Activated CD8-positive, alpha-beta T cell treated with anti-CD3 and anti-CD28 coated beads, Interleukin-2, amount 10 ng/mL, durations not matched to agents 7 days and 5 days (primary cell): ENCODE measurements at regions of chr1 and their contacts with region 1.

Region 1: GRCh38 chr1:101506541-101507164 is 269.8 kb downstream of the S1PR1 start:
- DNase-seq: peak; percentile 62
- ATAC-seq: peak; percentile 57
- H3K4me3 Mint-ChIP-seq: no peak overlapping the region
- H3K27ac Mint-ChIP-seq: no peak overlapping the region
- H3K4me1 Mint-ChIP-seq: no peaks in the 10 kb centered on the region
- H3K27me3 Mint-ChIP-seq: peaks cover 14% of the 10 kb centered on the region

Region 2: GRCh38 chr1:101448018-101448417 is 58.6 kb before region 1 on chr1:
- CTCF ChIA-PET with region 1: no interaction called
- POLR2A ChIA-PET with region 1: no interaction called
- DNase-seq: no peak
- ATAC-seq: no peak
- H3K4me3 Mint-ChIP-seq: no peak overlapping the region
- H3K27ac Mint-ChIP-seq: no peak overlapping the region
- H3K4me1 Mint-ChIP-seq: peaks cover 19% of the 10 kb centered on the region
- H3K27me3 Mint-ChIP-seq: peaks cover 11% of the 10 kb centered on the region

Region 3: GRCh38 chr1:101474039-101474665 is 32.5 kb before region 1 on chr1:
- CTCF ChIA-PET with region 1: interaction called, 14 read pairs
- POLR2A ChIA-PET with region 1: no interaction called
- DNase-seq: no peak
- ATAC-seq: no peak
- H3K4me3 Mint-ChIP-seq: no peak overlapping the region
- H3K27ac Mint-ChIP-seq: no peak overlapping the region
- H3K4me1 Mint-ChIP-seq: peaks cover 9% of the 10 kb centered on the region
- H3K27me3 Mint-ChIP-seq: no peaks in the 10 kb centered on the region

Region 4: DNA sequence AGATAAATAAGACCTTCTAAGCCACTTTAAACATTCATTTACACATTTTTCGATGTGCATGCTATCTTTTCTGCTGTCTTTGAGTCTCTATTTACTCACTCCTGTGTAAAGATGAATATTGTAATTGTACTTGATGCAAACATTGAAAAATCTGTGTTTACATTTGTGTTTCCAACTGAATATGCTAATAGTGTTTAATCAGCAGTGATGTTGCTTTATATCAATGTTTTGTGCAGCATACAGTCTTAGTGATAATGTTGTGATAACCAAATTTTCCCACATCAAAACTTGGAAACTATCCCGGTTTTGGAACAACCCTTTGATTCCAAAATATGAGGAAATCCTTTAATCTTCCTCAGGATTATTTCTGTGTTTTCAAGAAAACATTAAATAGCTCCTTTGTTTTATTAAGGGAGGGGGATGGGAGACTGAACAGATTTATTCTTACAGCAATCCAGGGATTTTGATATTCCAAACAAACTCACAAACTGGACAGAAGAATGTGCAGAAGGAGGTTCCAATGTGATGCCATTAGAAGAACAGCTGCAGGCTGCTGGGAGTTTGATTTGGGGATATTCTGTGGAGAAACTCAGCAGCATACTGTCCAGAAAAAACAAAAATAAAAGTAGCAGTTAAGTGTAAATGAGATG is 21.8 kb before region 1 on chr1:
- CTCF ChIA-PET with region 1: interaction called, 14 read pairs
- POLR2A ChIA-PET with region 1: no interaction called
- DNase-seq: no peak
- ATAC-seq: no peak
- H3K4me3 Mint-ChIP-seq: no peak overlapping the region
- H3K27ac Mint-ChIP-seq: no peak overlapping the region
- H3K4me1 Mint-ChIP-seq: no peaks in the 10 kb centered on the region
- H3K27me3 Mint-ChIP-seq: peaks cover 7% of the 10 kb centered on the region